ENCODE measurements at regions of chr3 and their contacts with region 1.

Region 1: DNA sequence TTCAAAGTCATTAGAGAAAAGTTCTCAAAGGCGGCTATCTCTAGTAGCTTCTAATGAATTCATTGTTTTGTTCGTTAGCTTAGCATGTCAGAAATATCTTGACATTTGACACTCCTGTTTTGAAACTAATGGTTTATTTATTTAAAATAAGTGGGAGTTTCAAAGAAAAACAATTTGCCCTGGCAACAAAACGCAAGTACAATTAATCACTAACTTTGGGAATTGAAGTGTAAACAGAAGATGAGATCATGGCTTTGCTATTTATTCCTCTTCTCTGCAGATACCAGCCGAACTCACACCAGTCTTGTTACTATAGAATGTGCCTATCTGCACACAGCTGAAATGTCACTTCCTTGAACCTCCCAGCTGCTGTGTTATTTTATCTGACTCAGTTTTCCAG is 27.5 kb downstream of the MASP1 start:
- DNase-seq: peak; percentile 72
- ATAC-seq: peak; percentile 94
- H3K4me3 ChIP-seq: no peak overlapping the region
- H3K27ac ChIP-seq: peak overlapping the region; percentile 61
- H3K4me1 ChIP-seq: peaks cover 36% of the 10 kb centered on the region
- H3K27me3 ChIP-seq: no peaks in the 10 kb centered on the region; a peak in 1 of 5 replicates
- CTCF ChIP-seq: no peak
- EP300 ChIP-seq: peak in 1 of 2 experiments; percentile 82; a peak in 1 of 4 replicates
- POLR2A ChIP-seq: no peak
- RAD21 ChIP-seq: no peak

Region 2: GRCh38 chr3:187276397-187277128 is 12.5 kb after region 1 on chr3:
- CTCF ChIA-PET with region 1: no interaction called
- POLR2A ChIA-PET with region 1: interaction called, 10 read pairs
- in situ Hi-C with region 1: no loop called
- intact Hi-C with region 1: no loop called
- DNase-seq: peak; percentile 65
- ATAC-seq: peak; percentile 89
- H3K4me3 ChIP-seq: peak overlapping the region in 1 of 3 experiments; percentile 20; a peak in 1 of 6 replicates
- H3K27ac ChIP-seq: peak overlapping the region; percentile 78
- H3K4me1 ChIP-seq: peaks cover 63% of the 10 kb centered on the region
- H3K27me3 ChIP-seq: no peaks in the 10 kb centered on the region
- CTCF ChIP-seq: no peak
- EP300 ChIP-seq: peak in 1 of 2 experiments; percentile 96; a peak in 2 of 4 replicates
- POLR2A ChIP-seq: no peak
- RAD21 ChIP-seq: no peak